ENCODE measurements at regions of chr2 and their contacts with region 1.

Region 1: GRCh38 chr2:68196120-68196716 is 38.5 kb downstream of the PNO1 start:
- DNase-seq: peak in 1 of 2 experiments; percentile 48
- ATAC-seq: no peak
- H3K4me3 ChIP-seq: no peak overlapping the region
- H3K27ac ChIP-seq: no peak overlapping the region
- H3K4me1 ChIP-seq: peaks cover 48% of the 10 kb centered on the region
- CTCF ChIP-seq: peak; percentile 61
- EP300 ChIP-seq: no peak
- POLR2A ChIP-seq: no peak
- RAD21 ChIP-seq: peak in 1 of 2 experiments; percentile 23; a peak in 2 of 5 replicates

Region 2: DNA sequence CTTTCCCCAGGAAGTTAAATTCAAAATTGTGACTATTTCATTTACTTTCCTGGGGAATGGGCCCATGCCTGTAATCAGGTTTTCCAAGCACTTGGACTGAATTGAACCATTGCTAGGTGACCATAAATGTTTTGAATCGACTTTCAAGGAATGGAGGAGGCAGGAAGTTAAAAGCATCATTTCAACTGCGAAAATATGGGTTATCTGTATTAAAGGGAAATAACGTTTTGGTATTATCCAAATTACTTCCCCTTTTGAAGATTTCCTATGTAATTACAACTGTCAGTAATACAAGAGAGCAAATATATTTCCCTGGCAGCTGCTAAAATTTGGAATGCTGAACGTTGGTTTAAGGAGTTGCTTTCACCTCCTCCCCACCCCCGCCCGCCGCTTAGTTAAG is 19.6 kb before region 1 on chr2:
- CTCF ChIA-PET with region 1: interaction called, 11 read pairs
- POLR2A ChIA-PET with region 1: no interaction called
- DNase-seq: no peak
- ATAC-seq: no peak
- H3K4me3 ChIP-seq: no peak overlapping the region
- H3K27ac ChIP-seq: no peak overlapping the region
- H3K4me1 ChIP-seq: no peaks in the 10 kb centered on the region
- CTCF ChIP-seq: no peak
- EP300 ChIP-seq: no peak
- POLR2A ChIP-seq: no peak
- RAD21 ChIP-seq: no peak

Region 3: DNA sequence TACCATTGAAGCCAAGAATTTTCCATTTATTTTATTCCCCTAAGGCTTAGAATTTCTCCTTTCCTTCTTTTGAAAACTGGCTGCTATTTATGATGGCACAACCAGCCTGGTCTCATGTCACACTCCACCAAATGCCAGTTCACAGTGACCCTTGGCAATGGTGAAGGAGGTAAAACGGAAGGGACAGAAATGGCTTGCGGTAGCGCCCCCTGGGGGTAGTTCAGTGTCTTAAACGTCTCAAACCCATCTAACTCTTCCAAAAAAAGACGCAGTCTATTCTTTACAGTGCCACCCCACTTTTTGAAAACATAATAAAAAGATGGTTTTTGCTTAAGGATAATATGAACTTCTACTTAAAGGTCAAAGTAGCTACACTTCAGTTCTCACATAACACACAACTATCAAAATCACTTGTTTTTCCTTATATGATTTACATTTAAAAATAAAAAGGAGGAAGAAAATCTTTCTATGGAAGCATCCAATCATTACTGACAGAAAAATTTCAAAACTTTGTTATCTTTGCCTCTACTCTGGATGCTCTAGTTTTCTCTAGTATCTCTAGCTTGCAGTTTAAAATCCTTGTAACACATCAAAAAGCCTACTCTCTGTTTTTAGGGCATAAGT is 10.6 kb before region 1 on chr2:
- CTCF ChIA-PET with region 1: interaction called, 35 read pairs
- POLR2A ChIA-PET with region 1: no interaction called
- DNase-seq: peak; percentile 52 to 81
- ATAC-seq: peak; percentile 84 to 88
- H3K4me3 ChIP-seq: no peak overlapping the region
- H3K27ac ChIP-seq: no peak overlapping the region
- H3K4me1 ChIP-seq: peaks cover 20% of the 10 kb centered on the region
- CTCF ChIP-seq: peak; percentile 87
- EP300 ChIP-seq: no peak
- POLR2A ChIP-seq: no peak
- RAD21 ChIP-seq: peak; percentile 25 to 29; a peak in 1 of 5 replicates

Region 4: GRCh38 chr2:68206793-68207192 is 10.6 kb after region 1 on chr2:
- CTCF ChIA-PET with region 1: interaction called, 14 read pairs
- POLR2A ChIA-PET with region 1: no interaction called
- DNase-seq: no peak
- ATAC-seq: no peak; a peak in 1 of 6 replicates
- H3K4me3 ChIP-seq: no peak overlapping the region
- H3K27ac ChIP-seq: no peak overlapping the region
- H3K4me1 ChIP-seq: no peaks in the 10 kb centered on the region
- CTCF ChIP-seq: no peak
- EP300 ChIP-seq: no peak
- POLR2A ChIP-seq: no peak
- RAD21 ChIP-seq: no peak

Region 5: DNA sequence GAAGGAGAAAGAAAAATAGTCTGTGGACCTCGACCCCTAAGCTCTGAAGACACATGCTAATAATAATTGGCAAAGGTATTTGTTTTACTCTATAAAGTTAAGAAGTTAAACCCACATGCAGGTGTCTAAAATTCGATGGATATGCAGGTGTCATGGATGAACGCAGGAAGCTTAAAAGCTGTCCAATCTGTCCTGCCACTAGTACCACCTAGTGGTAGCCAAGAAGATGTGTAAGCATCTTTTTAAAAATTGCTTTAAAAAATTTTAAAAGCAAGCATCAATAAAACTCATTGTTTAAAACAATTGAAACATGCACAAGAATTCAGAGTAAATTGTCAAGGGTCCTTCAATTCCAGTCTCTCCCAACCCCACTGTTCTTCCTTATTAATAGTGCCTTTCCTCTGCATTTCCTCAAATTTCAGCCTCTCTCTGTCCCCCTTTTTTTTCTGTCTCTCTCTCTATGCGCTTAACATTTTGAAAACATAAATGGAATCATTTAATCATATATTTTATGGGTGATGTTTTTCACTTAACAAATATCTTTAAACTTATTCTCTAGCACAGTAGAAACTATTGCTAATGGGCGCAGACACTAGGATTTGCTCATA is 86.7 kb after region 1 on chr2:
- CTCF ChIA-PET with region 1: interaction called, 11 read pairs
- POLR2A ChIA-PET with region 1: no interaction called
- DNase-seq: peak; percentile 69 to 70
- ATAC-seq: peak; percentile 84 to 88
- H3K4me3 ChIP-seq: no peak overlapping the region
- H3K27ac ChIP-seq: no peak overlapping the region
- H3K4me1 ChIP-seq: 0 out of 3 replicates have a peak, but pooled peaks cover 3% of the 10 kb centered on the region
- CTCF ChIP-seq: peak; percentile 87
- EP300 ChIP-seq: no peak
- POLR2A ChIP-seq: no peak
- RAD21 ChIP-seq: peak; percentile 76 to 80

Region 6: DNA sequence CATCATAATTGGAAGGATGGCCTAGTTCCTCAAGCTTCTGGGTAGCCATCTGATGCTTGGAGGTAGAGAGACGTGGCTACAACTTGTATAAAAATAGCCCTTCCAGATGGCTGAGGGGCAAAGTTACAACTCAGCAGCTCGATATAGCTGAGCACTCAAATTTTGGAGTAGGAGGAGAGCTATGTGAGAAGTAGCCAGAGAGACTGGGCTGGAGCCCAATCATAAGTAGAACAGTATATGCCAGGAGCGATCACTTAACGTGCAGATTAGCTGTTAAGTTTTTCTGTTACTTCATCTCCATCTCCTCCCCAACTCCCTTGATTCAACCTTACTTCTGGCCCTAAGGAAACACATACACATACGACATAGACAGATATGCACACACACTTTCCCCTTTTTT is 94.7 kb after region 1 on chr2:
- CTCF ChIA-PET with region 1: interaction called, 15 read pairs
- POLR2A ChIA-PET with region 1: no interaction called
- DNase-seq: no peak
- ATAC-seq: no peak
- H3K4me3 ChIP-seq: no peak overlapping the region
- H3K27ac ChIP-seq: no peak overlapping the region
- H3K4me1 ChIP-seq: no peaks in the 10 kb centered on the region
- CTCF ChIP-seq: no peak
- EP300 ChIP-seq: no peak
- POLR2A ChIP-seq: no peak
- RAD21 ChIP-seq: no peak

Measured in A549 (cell line).